HEK293T (cell line): ENCODE measurements at regions of chr3 and their contacts with region 1.

Region 1: GRCh38 chr3:9792405-9793160 is at the starts of genes ARPC4 and TADA3:
- DNase-seq: peak; percentile 96

Region 2: DNA sequence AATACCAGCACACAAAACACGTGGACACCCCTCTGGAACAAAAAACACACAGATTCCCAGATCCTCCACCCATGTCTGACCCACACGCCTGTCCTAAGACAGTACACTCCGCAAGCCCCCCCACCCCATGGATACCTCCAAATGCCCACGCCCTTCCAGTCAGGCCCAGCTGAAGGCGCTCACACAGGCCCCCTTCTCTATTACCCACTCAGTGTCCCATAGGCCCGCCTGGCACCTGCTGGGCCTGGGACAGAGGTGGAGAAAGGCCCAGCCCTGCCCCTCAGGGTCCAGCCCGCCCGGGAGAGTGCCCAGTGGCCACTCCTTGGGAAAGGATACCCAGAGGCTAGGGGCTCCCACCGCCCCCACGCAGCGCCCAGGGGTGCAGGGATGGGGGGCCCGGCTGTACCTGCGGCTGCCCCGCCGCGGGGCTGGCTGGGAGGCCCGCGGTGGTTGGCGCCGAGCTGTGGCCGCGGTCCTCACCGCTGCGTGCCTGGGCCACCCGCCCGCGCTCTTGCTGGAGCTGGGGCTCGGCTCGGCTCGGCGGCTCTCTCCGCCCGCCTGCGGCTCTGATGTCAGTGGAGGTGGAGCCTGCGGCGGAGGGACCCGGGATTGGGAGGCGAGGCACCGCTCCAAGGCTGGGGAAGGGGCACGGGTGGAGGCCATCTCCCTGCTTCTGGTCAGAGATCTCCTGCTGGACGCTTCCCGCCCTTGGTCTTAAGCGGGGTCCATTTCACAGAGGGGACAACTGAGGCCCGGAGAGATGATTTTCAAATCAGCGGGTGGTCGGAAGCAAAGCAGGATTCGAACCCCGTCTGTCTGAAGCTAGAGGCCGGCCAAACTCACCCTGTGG is 22.9 kb before region 1 on chr3 and contains the start of gene CAMK1:
- CTCF ChIA-PET with region 1: no interaction called
- POLR2A ChIA-PET with region 1: interaction called, 10 read pairs
- DNase-seq: peak; percentile 88

Region 3: GRCh38 chr3:9808345-9809037 is 15.9 kb after region 1 on chr3:
- CTCF ChIA-PET with region 1: no interaction called
- POLR2A ChIA-PET with region 1: interaction called, 14 read pairs
- DNase-seq: peak; percentile 48

Region 4: DNA sequence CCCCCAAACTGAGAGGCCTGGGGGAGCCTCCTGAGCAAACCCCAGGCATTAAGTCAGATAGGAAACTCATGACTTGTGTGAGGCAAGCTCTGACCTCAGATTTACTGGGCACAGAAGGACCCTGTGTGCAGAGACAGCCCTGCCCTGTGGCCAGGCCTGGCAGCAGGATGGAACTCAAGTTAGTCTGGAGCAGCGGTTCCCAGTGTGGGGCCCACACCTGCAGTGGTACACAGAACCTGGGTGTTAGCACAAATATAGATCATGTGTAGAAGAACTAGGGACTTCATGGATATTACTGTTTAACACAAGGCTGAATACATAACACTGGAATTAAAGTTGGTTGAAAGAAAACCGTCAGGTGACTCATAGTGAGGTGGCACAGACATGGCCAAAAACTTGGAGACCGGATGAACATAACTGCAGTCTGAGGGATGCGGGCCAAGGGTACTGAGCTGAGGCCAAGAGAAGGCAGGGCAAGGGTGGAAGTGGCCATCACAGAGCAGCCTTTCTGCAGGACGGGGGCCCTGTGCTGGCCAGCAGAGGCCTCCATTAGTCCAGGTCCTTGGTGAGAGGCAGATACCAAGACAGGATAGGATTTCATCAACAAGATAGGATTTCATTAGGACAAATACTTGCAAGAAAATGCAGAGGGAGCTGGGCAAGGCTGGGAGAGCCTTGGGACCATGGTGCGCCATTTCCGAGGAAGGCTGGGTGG is 413.0 kb after region 1 on chr3:
- CTCF ChIA-PET with region 1: no interaction called
- POLR2A ChIA-PET with region 1: no interaction called
- DNase-seq: no peak